ENCODE measurements at regions of chr11 and their contacts with region 1.

Region 1: DNA sequence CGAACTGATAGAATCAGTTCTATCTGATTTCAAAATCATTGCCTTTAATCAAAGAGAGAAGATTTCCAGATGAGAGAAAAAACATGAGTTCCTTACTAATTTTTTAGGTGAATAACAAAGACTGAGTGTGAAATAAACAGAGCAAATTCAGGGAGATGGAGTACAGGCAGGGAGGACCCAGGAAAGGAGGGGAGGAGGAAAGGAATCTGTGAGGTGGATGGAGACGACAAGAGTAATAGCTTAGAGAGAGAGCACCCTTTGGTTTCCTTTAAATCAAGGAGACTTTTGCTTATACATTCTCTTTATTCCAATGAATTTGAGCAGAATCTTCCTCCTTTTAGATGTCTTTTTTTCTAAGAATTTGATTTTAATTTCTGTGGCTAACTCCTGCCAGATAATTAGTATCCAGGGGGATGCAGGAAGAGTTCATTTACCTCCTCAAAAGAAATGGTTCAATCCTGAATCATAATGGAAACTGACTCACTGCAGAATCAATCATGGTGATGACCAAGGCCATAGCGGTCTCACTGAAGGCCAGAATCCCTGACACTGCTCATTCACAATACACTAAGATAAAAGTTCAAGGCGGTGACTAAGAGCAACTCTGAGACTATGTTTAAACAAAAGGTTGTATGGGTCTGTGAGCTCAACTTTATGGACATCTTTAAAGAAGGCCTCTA is 234.0 kb upstream of the ZC3H12C start:
- DNase-seq: no peak
- ATAC-seq: no peak
- H3K4me3 ChIP-seq: no peak overlapping the region
- H3K27ac ChIP-seq: no peak overlapping the region
- H3K4me1 ChIP-seq: peaks cover 6% of the 10 kb centered on the region
- H3K27me3 ChIP-seq: no peaks in the 10 kb centered on the region
- CTCF ChIP-seq: no peak
- EP300 ChIP-seq: no peak
- POLR2A ChIP-seq: no peak
- RAD21 ChIP-seq: no peak

Region 2: GRCh38 chr11:109933126-109933525 is 73.9 kb after region 1 on chr11:
- CTCF ChIA-PET with region 1: interaction called, 8 read pairs
- POLR2A ChIA-PET with region 1: no interaction called
- RAD21 ChIA-PET with region 1: interaction called, 5 read pairs
- SMC1A ChIA-PET with region 1: interaction called, 19 read pairs
- in situ Hi-C with region 1: no loop called
- intact Hi-C with region 1: no loop called
- DNase-seq: no peak
- ATAC-seq: no peak
- H3K4me3 ChIP-seq: no peak overlapping the region
- H3K27ac ChIP-seq: no peak overlapping the region
- H3K4me1 ChIP-seq: no peaks in the 10 kb centered on the region
- H3K27me3 ChIP-seq: no peaks in the 10 kb centered on the region; a peak in 2 of 4 replicates
- CTCF ChIP-seq: no peak
- EP300 ChIP-seq: no peak
- POLR2A ChIP-seq: no peak
- RAD21 ChIP-seq: no peak

Measured in GM12878 (cell line).